ENCODE measurements at regions of chr5 and their contacts with region 1.

Region 1: DNA sequence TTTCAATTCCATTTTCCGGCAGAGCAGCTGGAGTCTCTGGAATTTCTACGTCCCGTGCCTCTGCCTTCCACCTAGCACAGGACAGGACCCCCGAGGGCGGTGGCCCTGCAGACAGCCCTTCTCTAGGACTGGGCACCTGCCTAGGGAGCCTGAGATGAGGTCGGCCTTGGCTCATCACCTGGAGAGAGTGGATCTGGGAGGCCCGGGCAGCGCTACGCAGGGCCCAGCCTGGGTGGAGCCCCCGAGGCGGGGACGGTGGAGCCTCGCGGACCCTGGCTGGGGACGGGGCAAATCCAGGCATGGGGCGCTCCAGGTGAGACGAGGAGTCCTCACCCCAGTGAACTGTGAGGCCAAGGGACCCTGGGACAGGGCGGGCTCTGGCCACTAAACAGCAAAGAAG is 114.5 kb downstream of the MTRR start:
- DNase-seq: no peak
- H3K4me3 ChIP-seq: no peak overlapping the region
- CTCF ChIP-seq: no peak

Region 2: DNA sequence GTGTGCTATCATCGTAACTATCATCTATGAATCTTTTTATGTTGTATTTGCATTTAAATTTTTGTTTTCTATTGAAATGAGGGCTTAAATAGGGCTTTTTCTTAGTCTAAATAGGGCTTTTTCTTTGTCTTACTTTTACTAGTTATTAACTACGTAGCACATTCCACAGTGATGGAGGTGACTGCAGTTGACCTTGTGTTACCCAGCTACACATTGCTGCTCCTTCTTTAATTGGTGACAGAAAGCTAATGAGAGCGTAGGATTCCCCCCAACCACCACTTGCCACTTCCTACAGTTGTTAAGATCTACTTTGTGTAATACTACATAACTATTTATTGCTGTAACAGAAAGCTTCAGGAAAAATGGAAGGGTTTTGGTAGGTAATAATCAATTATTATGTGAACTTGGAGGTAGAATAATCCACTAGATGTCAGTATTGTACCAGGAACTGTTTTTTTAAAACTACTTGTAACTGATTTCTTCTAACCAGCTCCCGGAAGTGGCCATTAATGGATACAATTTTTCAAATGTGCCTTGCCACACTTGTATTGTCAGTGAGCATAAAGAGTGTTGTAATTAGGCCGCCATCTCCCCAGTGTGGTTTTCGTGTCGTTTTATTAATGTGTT is 96.5 kb before region 1 on chr5:
- in situ Hi-C with region 1: no loop called
- DNase-seq: peak; percentile 55
- H3K4me3 ChIP-seq: no peak overlapping the region
- CTCF ChIP-seq: peak; percentile 30

Region 3: DNA sequence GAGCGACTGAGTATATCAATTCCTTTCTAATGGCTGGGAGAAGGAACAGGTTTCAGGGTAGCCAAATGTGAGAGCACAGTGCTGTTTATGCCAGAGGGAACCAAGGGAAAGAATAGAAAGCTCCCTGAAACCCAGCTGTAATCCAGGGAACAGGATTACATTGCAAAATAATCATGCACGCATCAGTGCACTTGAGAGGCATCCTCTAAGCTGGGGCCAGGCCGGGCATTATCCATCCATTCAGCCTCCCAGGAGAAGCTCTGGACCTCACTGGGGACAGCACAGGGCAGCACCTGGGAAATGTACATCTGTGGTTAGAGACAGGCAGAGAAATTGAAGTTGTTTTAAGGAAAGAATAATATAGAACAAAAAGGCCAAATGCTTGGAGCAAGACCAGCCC is 41.7 kb before region 1 on chr5:
- in situ Hi-C with region 1: no loop called
- DNase-seq: no peak
- H3K4me3 ChIP-seq: no peak overlapping the region
- CTCF ChIP-seq: no peak

Region 4: GRCh38 chr5:8034852-8035251 is 51.4 kb after region 1 on chr5:
- in situ Hi-C with region 1: loop called (anchors 5 kb)
- DNase-seq: no peak
- H3K4me3 ChIP-seq: no peak overlapping the region
- CTCF ChIP-seq: no peak

Measured in astrocyte of the cerebellum (primary cell).